Astrocyte of the cerebellum (primary cell): ENCODE measurements at regions of chr18 and their contacts with region 1.

Region 1: GRCh38 chr18:63409301-63409700 is 13.0 kb downstream of the VPS4B start:
- DNase-seq: peak; percentile 22
- H3K4me3 ChIP-seq: no peak overlapping the region
- CTCF ChIP-seq: no peak

Region 2: GRCh38 chr18:63339920-63340484 is 69.3 kb before region 1 on chr18:
- in situ Hi-C with region 1: loop called (anchors 10 kb)
- DNase-seq: no peak
- H3K4me3 ChIP-seq: no peak overlapping the region
- CTCF ChIP-seq: peak; percentile 61